Tibial artery (tissue), 4 donors: ENCODE measurements at regions of chr9 and their contacts with region 1.

Region 1: GRCh38 chr9:103789686-103790085 is 304.4 kb upstream of the SMC2 start:
- DNase-seq: no peak
- H3K4me3 ChIP-seq: no peak overlapping the region
- H3K27ac ChIP-seq: no peak overlapping the region
- H3K4me1 ChIP-seq: no peaks in the 10 kb centered on the region
- H3K27me3 ChIP-seq: no peaks in the 10 kb centered on the region
- CTCF ChIP-seq: no peak

Region 2: DNA sequence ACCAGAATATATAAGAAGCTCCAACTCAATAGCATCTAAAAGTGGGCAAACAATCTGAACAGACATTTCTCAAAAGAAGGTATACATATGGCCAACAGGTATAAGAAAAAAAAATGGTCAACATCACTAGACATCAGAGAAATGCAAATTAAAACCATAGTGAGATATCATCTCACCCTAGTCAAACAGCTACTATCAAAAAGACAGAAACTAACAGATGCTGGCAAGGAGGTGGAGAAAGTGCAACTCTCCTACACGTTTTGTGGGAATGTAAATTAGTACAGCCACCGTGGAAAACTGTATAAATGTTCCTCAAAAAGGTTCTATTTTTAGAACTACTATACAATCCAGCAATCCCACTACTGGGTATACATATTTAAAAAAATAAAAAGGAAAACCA is 104.5 kb after region 1 on chr9:
- intact Hi-C with region 1: no loop called
- DNase-seq: no peak
- H3K4me3 ChIP-seq: no peak overlapping the region
- H3K27ac ChIP-seq: no peak overlapping the region
- H3K4me1 ChIP-seq: no peaks in the 10 kb centered on the region
- H3K27me3 ChIP-seq: no peaks in the 10 kb centered on the region
- CTCF ChIP-seq: no peak

Region 3: DNA sequence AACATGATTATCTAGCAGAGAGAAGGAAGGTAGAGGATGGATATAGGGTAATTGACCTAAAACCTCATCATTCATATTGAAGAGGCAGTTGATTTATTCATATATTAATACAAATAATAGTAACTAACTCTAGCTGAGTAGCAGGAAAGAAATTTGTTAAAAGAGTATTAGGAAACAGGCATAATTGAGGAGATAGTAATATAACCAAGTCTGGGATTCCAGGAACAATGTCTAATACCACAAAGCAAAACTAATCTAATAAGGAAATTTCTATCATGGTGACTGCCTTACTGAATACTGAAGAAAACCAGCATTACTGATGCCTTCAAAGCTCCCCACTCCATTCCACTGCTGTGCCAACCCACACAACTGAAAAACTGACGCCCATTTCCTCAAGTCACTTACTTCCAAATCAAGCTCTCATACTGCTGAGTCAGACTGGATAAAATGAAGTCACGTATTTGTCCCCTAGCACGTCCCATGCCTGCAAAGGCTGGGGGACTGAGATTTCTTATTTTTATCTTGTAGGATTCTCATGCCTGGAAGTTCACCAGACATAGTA is 458.3 kb after region 1 on chr9:
- intact Hi-C with region 1: no loop called
- DNase-seq: no peak
- H3K4me3 ChIP-seq: no peak overlapping the region
- H3K27ac ChIP-seq: no peak overlapping the region
- H3K4me1 ChIP-seq: no peaks in the 10 kb centered on the region
- H3K27me3 ChIP-seq: no peaks in the 10 kb centered on the region
- CTCF ChIP-seq: no peak

Region 4: DNA sequence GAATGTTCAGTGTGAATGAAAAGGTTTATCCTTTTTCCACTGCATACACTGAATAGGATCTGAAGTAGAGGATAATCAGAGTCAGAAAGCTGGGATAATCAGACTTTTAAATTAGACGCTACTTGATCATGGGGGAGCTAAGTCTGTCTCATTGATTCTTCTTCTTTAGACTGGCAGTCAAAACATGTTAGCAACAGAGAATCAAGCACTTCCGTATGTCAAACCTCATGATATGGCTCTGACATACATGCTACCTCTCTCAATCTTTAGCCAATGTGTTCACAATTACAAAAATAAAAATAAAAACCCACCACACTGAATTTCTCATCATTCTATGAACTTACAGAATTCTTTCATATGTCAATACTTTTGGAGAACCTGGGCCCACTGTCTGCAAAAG is 695.3 kb after region 1 on chr9:
- intact Hi-C with region 1: loop called (anchors 5 kb)
- DNase-seq: no peak
- H3K4me3 ChIP-seq: no peak overlapping the region
- H3K27ac ChIP-seq: no peak overlapping the region
- H3K4me1 ChIP-seq: no peaks in the 10 kb centered on the region
- H3K27me3 ChIP-seq: no peaks in the 10 kb centered on the region
- CTCF ChIP-seq: no peak